ENCODE measurements at regions of chr13 and their contacts with region 1.

Region 1: DNA sequence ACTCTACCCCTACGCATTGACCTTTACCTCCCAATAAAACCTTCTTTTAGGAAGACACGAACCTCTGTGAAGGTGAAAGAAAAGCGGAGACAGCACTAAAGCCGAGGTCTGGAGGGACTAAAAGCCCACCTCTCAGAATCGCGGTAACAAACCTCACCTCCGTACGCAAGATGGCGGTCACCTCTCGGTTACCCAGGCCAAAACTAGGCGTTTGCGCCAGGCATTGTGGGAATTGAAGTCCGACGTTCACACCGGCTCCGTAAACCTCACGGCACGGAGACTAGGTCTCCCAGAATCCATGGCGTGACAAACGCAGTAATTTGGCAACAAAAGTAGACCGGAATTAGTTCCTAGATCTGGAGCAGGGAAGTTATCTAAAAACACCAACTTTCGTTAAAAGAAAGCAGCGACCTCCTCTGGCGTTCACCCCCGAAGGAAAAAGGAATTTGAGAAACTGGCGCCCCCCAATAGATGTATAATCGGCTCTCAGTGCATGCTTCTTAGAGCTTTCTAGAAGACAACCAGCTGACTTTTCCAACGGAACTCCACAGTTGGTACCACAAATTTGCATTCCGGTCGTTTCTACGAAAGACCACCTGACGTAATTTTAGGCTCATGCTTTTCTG is at the start of gene N4BP2L2:
- DNase-seq: peak; percentile 94
- ATAC-seq: peak; percentile 95
- H3K4me3 ChIP-seq: peak within 1 kb of the TSS; percentile 94
- H3K27ac ChIP-seq: peak within 1 kb of the TSS; percentile 100
- H3K4me1 ChIP-seq: peaks cover 5% of the 10 kb centered on the region; the same call in 1 of the 2 replicates
- H3K27me3 ChIP-seq: no peaks in the 10 kb centered on the region
- CTCF ChIP-seq: peak; percentile 12 to 47 (median 13); a peak in 3 of 6 replicates
- EP300 ChIP-seq: 0 out of 4 replicates have a peak, but pooled peaks of 1 of the 2 experiments have one; percentile 13
- POLR2A ChIP-seq: peak; percentile 85
- RAD21 ChIP-seq: peak; percentile 39; the same call in 1 of the 2 replicates
- polyA plus RNA-seq, gene N4BP2L2: 41.7 to 59.8 TPM

Region 2: DNA sequence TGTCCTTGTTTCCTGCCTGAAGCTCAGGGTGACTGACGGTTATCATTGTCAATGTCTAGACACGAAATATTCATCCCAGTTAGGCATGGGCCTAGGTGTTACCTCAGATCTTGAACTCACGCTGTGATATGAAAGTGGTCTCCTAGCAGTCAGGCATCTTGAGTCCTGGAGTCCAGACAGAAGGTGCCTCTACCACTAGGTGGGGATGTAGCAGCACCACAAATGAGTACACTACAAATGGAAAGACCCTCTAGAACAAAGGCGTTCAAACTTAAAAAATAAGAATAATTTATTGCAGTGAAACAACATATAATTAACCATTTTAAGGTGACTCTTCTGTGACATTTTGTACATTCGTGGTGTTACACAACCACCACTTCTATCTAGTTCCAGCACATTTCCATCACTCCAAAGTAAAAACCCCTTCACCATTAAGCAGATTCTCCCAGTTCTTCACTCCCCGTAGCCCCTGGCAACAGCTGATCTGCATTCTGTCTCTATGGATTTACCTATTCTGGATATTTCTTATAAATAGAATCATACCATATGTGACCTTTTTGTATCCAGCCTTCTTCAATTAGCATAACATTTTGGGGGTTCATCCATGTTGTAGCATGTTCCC is 519.0 kb before region 1 on chr13:
- CTCF ChIA-PET with region 1: no interaction called
- POLR2A ChIA-PET with region 1: no interaction called
- RAD21 ChIA-PET with region 1: no interaction called
- SMC1A ChIA-PET with region 1: no interaction called
- in situ Hi-C with region 1: no loop called
- intact Hi-C with region 1: no loop called
- DNase-seq: peak; percentile 17
- ATAC-seq: peak; percentile 93
- H3K4me3 ChIP-seq: no peak overlapping the region
- H3K27ac ChIP-seq: no peak overlapping the region
- H3K4me1 ChIP-seq: no peaks in the 10 kb centered on the region; the same call in 1 of the 2 replicates
- H3K27me3 ChIP-seq: no peaks in the 10 kb centered on the region
- CTCF ChIP-seq: peak; percentile 63 to 77 (median 76)
- EP300 ChIP-seq: no peak
- POLR2A ChIP-seq: no peak
- RAD21 ChIP-seq: peak; percentile 89

Region 3: GRCh38 chr13:32427852-32428580 is 110.7 kb before region 1 on chr13 and contains the start of gene N4BP2L1:
- CTCF ChIA-PET with region 1: interaction called, 8 read pairs
- POLR2A ChIA-PET with region 1: interaction called, 4 read pairs
- RAD21 ChIA-PET with region 1: interaction called, 4 read pairs
- SMC1A ChIA-PET with region 1: interaction called, 4 read pairs
- in situ Hi-C with region 1: no loop called
- intact Hi-C with region 1: loop called (anchors 2 kb)
- DNase-seq: peak; percentile 87
- ATAC-seq: peak; percentile 85
- H3K4me3 ChIP-seq: peak within 1 kb of the TSS; percentile 94
- H3K27ac ChIP-seq: peak within 1 kb of the TSS; percentile 98
- H3K4me1 ChIP-seq: peaks cover 17% of the 10 kb centered on the region
- H3K27me3 ChIP-seq: no peaks in the 10 kb centered on the region
- CTCF ChIP-seq: no peak
- EP300 ChIP-seq: peak in 1 of 2 experiments; percentile 36; a peak in 1 of 4 replicates
- POLR2A ChIP-seq: peak; percentile 91
- RAD21 ChIP-seq: no peak
- polyA plus RNA-seq, gene N4BP2L1: 3.3 to 5.7 TPM

Region 4: GRCh38 chr13:32511482-32511881 is 27.3 kb before region 1 on chr13:
- CTCF ChIA-PET with region 1: no interaction called
- POLR2A ChIA-PET with region 1: no interaction called
- RAD21 ChIA-PET with region 1: no interaction called
- SMC1A ChIA-PET with region 1: no interaction called
- in situ Hi-C with region 1: no loop called
- intact Hi-C with region 1: no loop called
- DNase-seq: no peak
- ATAC-seq: no peak
- H3K4me3 ChIP-seq: no peak overlapping the region
- H3K27ac ChIP-seq: no peak overlapping the region
- H3K4me1 ChIP-seq: no peaks in the 10 kb centered on the region
- H3K27me3 ChIP-seq: no peaks in the 10 kb centered on the region
- CTCF ChIP-seq: no peak
- EP300 ChIP-seq: no peak
- POLR2A ChIP-seq: no peak
- RAD21 ChIP-seq: no peak

Measured in GM12878 (cell line).